SK-N-SH (cell line): ENCODE measurements at regions of chr2 and their contacts with region 1.

Region 1: DNA sequence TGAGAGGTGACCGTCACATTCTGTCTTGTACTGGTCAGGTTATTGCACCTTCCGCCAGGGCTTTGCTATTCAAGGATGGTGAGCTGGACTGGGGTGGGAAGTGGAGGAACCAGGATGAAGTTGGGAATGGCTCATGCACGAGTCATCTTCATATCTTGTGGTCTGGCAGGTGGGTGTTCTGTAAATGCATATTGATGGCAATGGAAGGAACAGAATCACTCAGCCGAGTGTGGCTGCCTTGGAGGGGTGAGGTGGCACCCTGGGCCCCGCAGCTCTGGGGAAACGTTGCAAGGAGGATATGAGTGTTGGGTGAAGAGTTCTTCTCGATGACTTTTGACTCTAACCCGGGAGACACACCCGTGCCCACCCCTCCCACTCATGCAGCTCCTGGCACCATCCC is 1.2 kb downstream of the NEU2 start:
- DNase-seq: no peak
- H3K4me3 ChIP-seq: no peak overlapping the region
- H3K27ac ChIP-seq: no peak overlapping the region
- H3K4me1 ChIP-seq: no peaks in the 10 kb centered on the region
- H3K27me3 ChIP-seq: no peaks in the 10 kb centered on the region
- CTCF ChIP-seq: no peak
- EP300 ChIP-seq: no peak
- RAD21 ChIP-seq: no peak

Region 2: DNA sequence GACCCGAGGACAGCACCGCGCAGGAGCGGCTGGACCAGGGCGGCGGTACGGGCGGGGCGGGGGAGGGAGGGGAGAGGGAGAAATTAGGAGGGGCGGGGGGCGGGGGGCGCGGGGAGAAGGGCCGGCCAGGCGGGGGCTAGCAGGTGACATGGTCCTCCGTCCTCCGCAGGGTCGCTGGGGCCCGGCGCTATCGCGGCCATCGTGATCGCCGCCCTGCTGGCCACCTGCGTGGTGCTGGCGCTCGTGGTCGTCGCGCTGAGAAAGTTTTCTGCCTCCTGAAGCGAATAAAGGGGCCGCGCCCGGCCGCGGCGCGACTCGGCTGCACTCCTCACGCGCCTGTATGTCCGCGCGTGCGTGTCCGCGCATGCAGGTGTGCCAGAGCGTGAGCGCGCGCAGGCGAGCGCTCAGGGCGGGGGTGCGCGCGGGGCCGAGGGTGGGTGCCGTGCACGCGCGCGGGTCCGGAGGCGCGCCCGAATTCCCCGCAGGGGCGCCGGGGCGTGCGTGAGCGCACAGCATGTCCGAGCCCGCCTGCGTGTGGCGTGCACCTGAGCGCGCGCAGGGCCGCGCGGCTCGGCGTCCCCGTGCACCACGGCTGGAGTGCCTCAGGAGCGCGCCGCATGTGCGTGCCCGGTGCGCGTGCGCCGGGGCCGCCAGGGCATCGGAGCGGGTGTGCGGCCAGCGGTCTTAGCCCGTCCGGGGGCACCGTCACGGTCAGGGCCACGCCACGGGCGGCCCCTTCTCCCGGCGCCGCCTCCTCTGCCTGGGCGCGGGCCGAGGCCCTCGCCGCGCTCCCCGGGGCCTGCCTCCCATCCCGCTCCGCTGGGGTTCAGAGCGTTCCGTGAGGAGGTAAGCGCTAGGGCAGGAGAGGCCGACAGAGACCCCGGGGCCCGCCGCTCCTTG is 157.3 kb before region 1 on chr2:
- CTCF ChIA-PET with region 1: interaction called, 10 read pairs
- POLR2A ChIA-PET with region 1: no interaction called
- DNase-seq: peak; percentile 88
- H3K4me3 ChIP-seq: peak overlapping the region in 1 of 2 experiments; percentile 48; a peak in 2 of 4 replicates
- H3K27ac ChIP-seq: no peak overlapping the region
- H3K4me1 ChIP-seq: peaks cover 0 to 10% of the 10 kb centered on the region in 2 experiments; a peak in 1 of 4 replicates
- H3K27me3 ChIP-seq: no peaks in the 10 kb centered on the region
- CTCF ChIP-seq: peak; percentile 23; the same call in 1 of the 2 replicates
- EP300 ChIP-seq: no peak
- RAD21 ChIP-seq: no peak

Region 3: GRCh38 chr2:232942831-232943230 is 90.8 kb before region 1 on chr2:
- CTCF ChIA-PET with region 1: no interaction called
- POLR2A ChIA-PET with region 1: no interaction called
- DNase-seq: no peak
- H3K4me3 ChIP-seq: no peak overlapping the region
- H3K27ac ChIP-seq: no peak overlapping the region
- H3K4me1 ChIP-seq: no peaks in the 10 kb centered on the region
- H3K27me3 ChIP-seq: no peaks in the 10 kb centered on the region
- CTCF ChIP-seq: no peak
- EP300 ChIP-seq: no peak
- RAD21 ChIP-seq: no peak